Activated CD4-positive, alpha-beta T cell treated with anti-CD3 and anti-CD28 coated beads for 36 hours (primary cell): ENCODE measurements at regions of chr3 and their contacts with region 1.

Region 1: DNA sequence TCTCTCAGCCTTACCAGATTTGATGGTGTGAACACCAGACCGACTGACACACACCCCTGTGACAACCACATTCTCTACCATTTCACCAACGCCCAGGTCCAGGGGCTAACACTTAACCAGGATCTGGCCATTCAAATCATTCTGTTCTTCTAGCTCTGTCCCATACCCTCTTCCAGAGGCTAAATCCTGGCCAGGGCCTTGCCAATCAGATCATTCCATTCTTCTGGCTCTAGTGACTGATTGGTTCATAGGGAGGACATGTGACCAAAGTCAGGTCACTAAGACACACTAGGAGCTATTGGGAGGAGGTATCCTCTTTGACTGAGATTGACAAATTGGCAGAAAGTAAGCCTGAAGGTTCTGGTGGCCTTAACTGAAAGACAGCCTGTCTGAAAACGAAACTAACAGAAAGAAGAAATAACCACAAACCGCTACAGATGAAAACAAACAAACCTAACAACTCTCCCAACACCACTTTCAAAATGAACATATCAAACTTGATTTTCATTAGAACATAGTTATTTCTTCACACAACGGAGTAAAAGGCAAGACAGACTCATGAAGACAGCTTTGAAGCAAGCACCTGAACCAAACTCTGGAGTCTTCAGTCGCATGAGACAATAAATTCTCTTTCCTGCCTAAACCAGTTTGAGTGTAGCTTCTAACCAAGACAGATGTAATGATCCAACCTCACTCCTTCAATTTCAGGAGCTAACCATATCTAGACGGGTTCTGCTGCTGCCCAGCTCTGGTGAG is 68.5 kb downstream of the TRANK1 start:
- DNase-seq: no peak
- ATAC-seq: peak; percentile 94
- H3K4me3 Mint-ChIP-seq: peak overlapping the region; percentile 44
- H3K27ac Mint-ChIP-seq: peak overlapping the region; percentile 69
- H3K4me1 Mint-ChIP-seq: peaks cover 37% of the 10 kb centered on the region
- H3K27me3 Mint-ChIP-seq: peaks cover 2% of the 10 kb centered on the region

Region 2: DNA sequence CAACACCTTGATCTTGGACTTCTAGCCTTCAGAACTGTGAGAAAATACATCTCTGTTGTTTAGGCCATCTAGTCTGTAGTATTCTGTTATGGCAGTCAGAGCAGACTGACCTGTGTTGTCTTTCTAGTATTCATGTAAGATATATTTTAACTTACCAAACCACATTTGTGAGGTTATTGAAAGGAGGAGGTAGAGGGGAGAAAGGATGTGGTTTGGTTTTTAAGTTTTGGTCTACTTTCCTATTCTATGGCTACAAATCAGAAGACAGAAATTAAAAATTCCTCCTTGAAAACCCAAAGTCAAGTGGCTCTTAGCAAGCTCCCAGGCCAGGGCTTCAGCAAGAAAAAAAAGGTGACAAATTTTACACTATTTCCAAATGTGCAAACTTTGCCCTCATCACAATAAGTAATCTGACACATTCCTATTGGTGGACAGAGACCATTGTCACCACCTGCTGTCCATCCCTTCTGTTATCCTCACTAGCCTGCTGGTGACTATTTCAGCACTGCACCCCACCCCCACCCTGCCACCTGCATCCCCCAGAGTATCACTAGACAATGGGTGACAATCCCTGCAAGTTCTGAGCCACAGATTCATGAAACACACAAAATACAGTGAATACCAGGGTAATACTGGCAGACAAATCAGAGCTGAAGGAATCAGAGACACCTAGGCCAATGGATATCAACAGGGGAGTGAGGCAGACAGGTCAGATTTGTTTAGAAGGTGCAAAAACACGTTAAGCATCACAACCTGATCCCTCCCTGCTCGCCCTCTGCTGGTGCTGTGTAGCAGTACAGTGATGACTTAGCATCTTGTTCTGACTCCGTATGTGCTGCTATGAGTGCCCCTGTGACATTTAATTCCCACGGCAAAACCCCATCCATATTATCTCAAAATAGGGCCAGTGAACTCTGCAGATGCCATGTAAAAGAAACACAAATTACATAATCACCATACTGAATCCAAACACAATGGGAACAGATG is 33.0 kb before region 1 on chr3:
- CTCF ChIA-PET with region 1: no interaction called
- POLR2A ChIA-PET with region 1: no interaction called
- intact Hi-C with region 1: loop called in 1 of 2 experiments (anchors 1 kb)
- DNase-seq: peak; percentile 85
- ATAC-seq: peak; percentile 95
- H3K4me3 Mint-ChIP-seq: no peak overlapping the region
- H3K27ac Mint-ChIP-seq: peak overlapping the region; percentile 9
- H3K4me1 Mint-ChIP-seq: peaks cover 18% of the 10 kb centered on the region
- H3K27me3 Mint-ChIP-seq: no peaks in the 10 kb centered on the region

Region 3: DNA sequence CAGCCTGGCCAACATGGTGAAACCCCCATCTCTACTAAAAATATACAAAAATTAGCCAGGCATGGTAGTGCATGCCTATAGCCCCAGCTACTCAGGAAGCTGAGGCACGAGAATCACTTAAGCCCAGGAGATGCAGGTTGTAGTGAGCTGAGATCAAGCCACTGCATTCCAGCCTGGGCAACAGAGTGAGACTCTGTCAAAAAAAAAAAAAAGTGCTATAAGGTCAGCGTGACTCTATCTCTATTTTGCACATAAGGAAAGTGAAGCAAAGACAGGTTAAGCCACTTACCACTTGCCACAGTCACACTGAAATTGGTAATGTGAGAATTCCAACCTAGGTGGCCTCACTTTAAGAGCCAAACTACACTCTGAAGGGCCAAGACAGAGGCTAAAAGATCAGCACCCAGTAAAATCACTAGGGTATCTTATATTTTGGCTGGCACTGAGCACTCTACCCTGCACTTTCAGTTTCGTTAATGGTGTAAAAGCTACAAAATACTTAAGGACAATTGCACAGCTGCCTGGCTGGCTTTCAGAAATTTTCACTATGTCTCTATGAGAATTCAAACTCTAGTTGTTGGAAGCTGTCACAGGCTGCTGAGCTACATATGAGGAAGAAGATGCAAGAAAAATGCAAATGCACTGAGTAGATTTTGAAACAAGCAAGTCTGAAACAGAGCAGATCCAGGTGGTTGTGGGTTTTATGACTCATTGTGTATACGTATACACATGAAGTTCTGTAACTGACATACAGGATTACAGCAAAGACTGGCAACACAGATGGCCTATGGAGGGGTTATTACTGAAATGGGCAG is 35.8 kb after region 1 on chr3:
- CTCF ChIA-PET with region 1: no interaction called
- POLR2A ChIA-PET with region 1: interaction called, 3 read pairs
- intact Hi-C with region 1: loop called (anchors 1 kb)
- DNase-seq: peak; percentile 57
- ATAC-seq: peak; percentile 87
- H3K4me3 Mint-ChIP-seq: peak overlapping the region; percentile 61
- H3K27ac Mint-ChIP-seq: peak overlapping the region; percentile 85
- H3K4me1 Mint-ChIP-seq: peaks cover 44% of the 10 kb centered on the region
- H3K27me3 Mint-ChIP-seq: peaks cover 2% of the 10 kb centered on the region

Region 4: GRCh38 chr3:36944012-36944640 is 67.8 kb after region 1 on chr3:
- CTCF ChIA-PET with region 1: no interaction called
- POLR2A ChIA-PET with region 1: no interaction called
- intact Hi-C with region 1: loop called in 1 of 2 experiments (anchors 1 kb)
- DNase-seq: peak; percentile 55
- ATAC-seq: peak; percentile 45
- H3K4me3 Mint-ChIP-seq: peak overlapping the region; percentile 75
- H3K27ac Mint-ChIP-seq: peak overlapping the region; percentile 51
- H3K4me1 Mint-ChIP-seq: peaks cover 11% of the 10 kb centered on the region
- H3K27me3 Mint-ChIP-seq: no peaks in the 10 kb centered on the region

Region 5: DNA sequence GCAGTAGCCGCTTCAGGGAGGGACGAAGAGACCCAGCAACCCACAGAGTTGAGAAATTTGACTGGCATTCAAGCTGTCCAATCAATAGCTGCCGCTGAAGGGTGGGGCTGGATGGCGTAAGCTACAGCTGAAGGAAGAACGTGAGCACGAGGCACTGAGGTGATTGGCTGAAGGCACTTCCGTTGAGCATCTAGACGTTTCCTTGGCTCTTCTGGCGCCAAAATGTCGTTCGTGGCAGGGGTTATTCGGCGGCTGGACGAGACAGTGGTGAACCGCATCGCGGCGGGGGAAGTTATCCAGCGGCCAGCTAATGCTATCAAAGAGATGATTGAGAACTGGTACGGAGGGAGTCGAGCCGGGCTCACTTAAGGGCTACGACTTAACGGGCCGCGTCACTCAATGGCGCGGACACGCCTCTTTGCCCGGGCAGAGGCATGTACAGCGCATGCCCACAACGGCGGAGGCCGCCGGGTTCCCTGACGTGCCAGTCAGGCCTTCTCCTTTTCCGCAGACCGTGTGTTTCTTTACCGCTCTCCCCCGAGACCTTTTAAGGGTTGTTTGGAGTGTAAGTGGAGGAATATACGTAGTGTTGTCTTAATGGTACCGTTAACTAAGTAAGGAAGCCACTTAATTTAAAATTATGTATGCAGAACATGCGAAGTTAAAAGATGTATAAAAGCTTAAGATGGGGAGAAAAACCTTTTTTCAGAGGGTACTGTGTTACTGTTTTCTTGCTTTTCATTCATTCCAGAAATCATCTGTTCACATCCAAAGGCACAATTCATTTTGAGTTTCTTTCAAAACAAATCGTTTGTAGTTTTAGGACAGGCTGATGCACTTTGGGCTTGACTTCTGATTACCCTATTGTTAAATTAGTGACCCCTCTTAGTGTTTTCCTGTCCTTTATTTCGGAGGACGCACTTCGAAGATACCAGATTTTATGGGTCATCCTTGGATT is 117.2 kb after region 1 on chr3 and contains the start of gene MLH1:
- CTCF ChIA-PET with region 1: no interaction called
- POLR2A ChIA-PET with region 1: no interaction called
- intact Hi-C with region 1: loop called in 1 of 2 experiments (anchors 1 kb)
- DNase-seq: peak; percentile 98
- ATAC-seq: peak; percentile 90
- H3K4me3 Mint-ChIP-seq: no peak within 1 kb of the TSS
- H3K27ac Mint-ChIP-seq: no peak within 1 kb of the TSS
- H3K4me1 Mint-ChIP-seq: peaks cover 43% of the 10 kb centered on the region
- H3K27me3 Mint-ChIP-seq: no peaks in the 10 kb centered on the region
- total RNA-seq, gene MLH1: 89.0 to 135 TPM